ENCODE measurements at regions of chr15 and their contacts with region 1.

Region 1: DNA sequence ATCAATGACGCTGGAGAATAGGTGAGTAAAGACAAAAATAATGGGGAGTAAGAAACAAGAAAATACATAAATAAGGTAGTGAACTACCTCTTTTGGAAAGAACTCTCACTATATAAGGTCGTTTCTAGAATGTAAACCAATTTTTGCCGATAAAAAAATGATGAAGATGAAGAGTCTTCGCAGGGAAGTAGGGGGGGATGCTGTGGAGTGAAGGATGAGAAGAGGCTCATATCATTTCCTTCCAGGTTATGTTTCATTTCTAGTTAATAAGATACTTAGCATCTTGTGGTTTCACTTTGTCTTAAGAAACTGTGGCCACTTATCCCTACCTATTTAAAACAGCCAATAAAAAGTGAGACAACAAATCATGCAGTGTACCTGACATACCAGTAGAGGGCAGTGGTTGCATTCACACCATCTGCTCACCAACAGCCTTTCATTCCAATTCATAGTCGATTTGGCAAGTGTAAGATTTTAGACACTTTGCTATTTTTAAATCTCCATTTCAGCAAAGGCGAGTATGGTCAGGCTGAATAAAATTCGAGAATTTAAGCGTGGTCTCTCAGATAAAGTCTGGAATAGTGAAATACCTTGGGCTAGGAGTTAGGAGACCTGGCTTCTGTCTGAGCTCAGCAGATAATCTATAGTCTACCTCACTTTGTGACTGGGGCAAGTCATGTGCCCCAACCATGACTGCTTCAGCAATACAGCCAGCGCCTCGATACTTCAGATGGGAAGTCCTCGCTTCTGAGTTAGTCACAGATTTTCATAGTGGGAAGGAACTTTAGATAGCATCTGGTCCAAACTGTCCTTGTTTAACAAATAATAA is 28.9 kb upstream of the ICE2 start:
- DNase-seq: peak in 2 of 5 donors; percentile 20 to 59
- H3K4me3 ChIP-seq: no peak overlapping the region
- H3K27ac ChIP-seq: no peak overlapping the region
- H3K4me1 ChIP-seq: no peaks in the 10 kb centered on the region
- H3K27me3 ChIP-seq: no peaks in the 10 kb centered on the region
- CTCF ChIP-seq: peak; percentile 83 to 89 (median 88)
- EP300 ChIP-seq: no peak
- POLR2A ChIP-seq: no peak

Region 2: GRCh38 chr15:61051569-61052031 is 543.8 kb after region 1 on chr15:
- intact Hi-C with region 1: loop called in 1 of 4 experiments (anchors 5 kb)
- DNase-seq: peak; percentile 51 to 63 (median 56)
- H3K4me3 ChIP-seq: no peak overlapping the region
- H3K27ac ChIP-seq: no peak overlapping the region
- H3K4me1 ChIP-seq: peaks cover 4% of the 10 kb centered on the region
- H3K27me3 ChIP-seq: no peaks in the 10 kb centered on the region
- CTCF ChIP-seq: peak; percentile 35 to 54 (median 53)
- EP300 ChIP-seq: no peak
- POLR2A ChIP-seq: no peak

Measured in ovary (tissue), 10 donors.